ENCODE measurements at regions of chr3 and their contacts with region 1.

Region 1: GRCh38 chr3:99645277-99646106 is 7.1 kb downstream of the COL8A1 start:
- DNase-seq: peak; percentile 8 to 29 (median 15)
- ATAC-seq: peak; percentile 76
- H3K4me3 ChIP-seq: no peak overlapping the region
- H3K27ac ChIP-seq: no peak overlapping the region
- H3K4me1 ChIP-seq: no peaks in the 10 kb centered on the region
- H3K27me3 ChIP-seq: no peaks in the 10 kb centered on the region
- CTCF ChIP-seq: peak; percentile 70 to 88 (median 73)
- EP300 ChIP-seq: no peak
- POLR2A ChIP-seq: no peak
- RAD21 ChIP-seq: peak; percentile 61 to 63

Region 2: GRCh38 chr3:99753268-99753975 is 107.9 kb after region 1 on chr3:
- CTCF ChIA-PET with region 1: interaction called, 4 read pairs
- POLR2A ChIA-PET with region 1: interaction called, 3 read pairs
- in situ Hi-C with region 1: no loop called
- intact Hi-C with region 1: loop called (anchors 1 kb)
- DNase-seq: peak; percentile 5 to 44 (median 14)
- ATAC-seq: peak; percentile 80
- H3K4me3 ChIP-seq: no peak overlapping the region
- H3K27ac ChIP-seq: no peak overlapping the region
- H3K4me1 ChIP-seq: no peaks in the 10 kb centered on the region
- H3K27me3 ChIP-seq: no peaks in the 10 kb centered on the region
- CTCF ChIP-seq: peak; percentile 51 to 78 (median 63)
- EP300 ChIP-seq: no peak
- POLR2A ChIP-seq: no peak
- RAD21 ChIP-seq: peak; percentile 78 to 80

Region 3: GRCh38 chr3:99789011-99789721 is 143.7 kb after region 1 on chr3:
- CTCF ChIA-PET with region 1: interaction called, 4 read pairs
- POLR2A ChIA-PET with region 1: no interaction called
- in situ Hi-C with region 1: no loop called
- intact Hi-C with region 1: loop called (anchors 1 kb)
- DNase-seq: peak in 3 of 4 experiments; percentile 8 to 36 (median 25)
- ATAC-seq: peak; percentile 96
- H3K4me3 ChIP-seq: no peak overlapping the region
- H3K27ac ChIP-seq: no peak overlapping the region
- H3K4me1 ChIP-seq: no peaks in the 10 kb centered on the region
- H3K27me3 ChIP-seq: peaks cover 0 to 4% of the 10 kb centered on the region in 2 experiments; a peak in 1 of 5 replicates
- CTCF ChIP-seq: peak; percentile 53 to 69 (median 62)
- EP300 ChIP-seq: no peak
- POLR2A ChIP-seq: no peak
- RAD21 ChIP-seq: peak; percentile 80 to 84

Region 4: GRCh38 chr3:99808151-99808794 is 162.8 kb after region 1 on chr3:
- CTCF ChIA-PET with region 1: interaction called, 3 read pairs
- POLR2A ChIA-PET with region 1: no interaction called
- in situ Hi-C with region 1: no loop called
- intact Hi-C with region 1: loop called (anchors 5 kb)
- DNase-seq: peak; percentile 41 to 58 (median 50)
- ATAC-seq: peak; percentile 64
- H3K4me3 ChIP-seq: no peak overlapping the region
- H3K27ac ChIP-seq: no peak overlapping the region
- H3K4me1 ChIP-seq: no peaks in the 10 kb centered on the region
- H3K27me3 ChIP-seq: no peaks in the 10 kb centered on the region
- CTCF ChIP-seq: peak; percentile 54 to 70 (median 68)
- EP300 ChIP-seq: no peak
- POLR2A ChIP-seq: no peak
- RAD21 ChIP-seq: peak; percentile 46 to 63

Measured in K562 (cell line).